Activated T-helper 1 cell treated with anti-CD3 and anti-CD28 coated beads, Interleukin-12 subunit alpha, Interleukin-12 subunit beta, Interleukin-2, Interleukin-4 antibody, amounts not matched to agents 30 ng/mL and 10 ng/mL and 1 ng/mL, durations not matched to agents 14 hours and 24 hours and 36 hours (primary cell): ENCODE measurements at regions of chr3 and their contacts with region 1.

Region 1: GRCh38 chr3:186821429-186822367 is 15.4 kb upstream of the RFC4 start:
- DNase-seq: no peak
- H3K4me3 Mint-ChIP-seq: no peak overlapping the region
- H3K27ac Mint-ChIP-seq: no peak overlapping the region
- H3K4me1 Mint-ChIP-seq: peaks cover 18% of the 10 kb centered on the region
- H3K27me3 Mint-ChIP-seq: peaks cover 8% of the 10 kb centered on the region

Region 2: DNA sequence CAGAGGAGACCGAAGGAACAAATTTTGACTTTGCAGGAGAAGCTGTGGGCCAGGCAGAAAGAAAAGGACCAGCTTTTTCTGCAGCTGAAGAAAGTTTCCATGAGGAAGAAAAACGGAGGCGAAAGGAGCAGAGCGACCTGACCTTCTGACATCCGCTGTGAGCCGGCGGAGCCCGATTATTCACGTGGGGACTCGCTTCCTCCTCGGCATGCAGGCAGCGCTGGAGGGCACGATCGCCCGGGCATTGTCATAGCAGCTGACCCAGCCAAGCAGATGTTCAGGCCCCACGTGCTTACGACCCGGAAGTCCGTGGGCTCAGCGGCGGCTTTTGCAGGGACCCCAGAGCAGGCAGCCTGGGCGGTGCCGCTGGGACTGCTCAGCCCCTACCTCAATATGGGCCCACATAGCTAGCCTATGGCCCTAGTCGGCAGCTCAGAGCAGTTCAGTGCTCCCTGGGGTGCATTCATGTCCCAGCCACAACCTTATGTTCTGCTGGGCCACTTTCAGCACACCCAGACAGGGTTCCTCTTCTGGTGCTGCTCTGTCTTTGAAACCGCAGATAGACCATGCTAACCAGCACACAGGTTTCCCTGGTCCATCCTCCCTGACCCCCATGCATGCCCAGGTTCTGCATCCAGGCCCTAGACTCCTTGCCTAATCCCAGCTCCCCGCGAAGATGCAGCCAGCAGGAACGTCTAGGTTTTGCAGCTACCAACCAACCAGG is 48.8 kb before region 1 on chr3:
- intact Hi-C with region 1: loop called (anchors 5 kb)
- DNase-seq: peak; percentile 44
- H3K4me3 Mint-ChIP-seq: peak overlapping the region; percentile 86
- H3K27ac Mint-ChIP-seq: peak overlapping the region; percentile 92
- H3K4me1 Mint-ChIP-seq: peaks cover 20% of the 10 kb centered on the region
- H3K27me3 Mint-ChIP-seq: peaks cover 2% of the 10 kb centered on the region

Region 3: DNA sequence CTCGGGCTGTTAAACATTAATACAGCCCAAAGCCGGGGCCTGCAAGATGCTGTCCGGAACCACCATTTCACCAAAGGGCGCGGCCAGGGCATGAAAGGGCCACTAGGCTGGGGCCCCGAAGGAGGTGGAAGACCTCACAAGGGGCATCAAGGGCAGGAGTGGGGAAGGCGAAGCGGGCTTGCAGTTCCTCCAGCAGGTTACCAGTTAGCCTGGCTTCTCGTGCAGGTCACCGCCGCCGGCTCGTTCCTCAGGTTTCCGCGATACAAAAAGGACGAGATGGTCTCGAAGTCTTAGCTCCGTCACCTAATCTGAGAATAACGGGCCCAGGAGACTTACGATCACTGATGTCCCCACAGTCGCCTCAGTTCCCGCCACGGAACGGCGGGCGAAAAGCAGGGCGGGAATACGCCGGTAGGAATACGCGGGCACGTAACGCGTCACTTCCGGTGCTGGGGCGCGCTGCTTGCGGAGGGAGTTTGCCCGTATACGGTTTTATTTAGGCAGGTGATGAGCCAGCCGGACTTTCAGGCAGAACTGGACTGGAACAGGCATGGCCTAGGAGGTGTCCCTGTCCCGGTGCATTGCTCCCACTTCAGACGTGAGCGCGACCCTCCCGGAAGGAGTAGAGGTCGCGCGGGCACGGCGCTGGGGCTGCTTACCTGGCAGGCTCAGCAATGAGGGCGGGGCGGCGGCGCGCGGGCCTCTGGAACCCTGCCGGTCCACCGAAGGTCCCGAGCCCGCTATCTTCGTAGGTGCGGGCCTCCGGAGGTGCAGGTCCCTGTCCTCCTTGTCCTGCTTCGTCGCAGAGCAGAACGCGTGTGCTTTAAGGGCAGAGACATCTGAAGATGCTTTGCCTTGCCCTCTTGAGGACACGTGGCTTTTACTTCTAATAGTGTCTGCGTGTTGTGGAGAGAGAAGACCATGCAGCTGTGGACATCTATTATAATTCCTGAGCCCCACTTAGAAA is 15.3 kb before region 1 on chr3 and contains the start of gene RFC4:
- intact Hi-C with region 1: loop called (anchors 1 kb)
- DNase-seq: peak; percentile 80
- H3K4me3 Mint-ChIP-seq: peak within 1 kb of the TSS; percentile 93
- H3K27ac Mint-ChIP-seq: peak within 1 kb of the TSS; percentile 85
- H3K4me1 Mint-ChIP-seq: peaks cover 31% of the 10 kb centered on the region
- H3K27me3 Mint-ChIP-seq: no peaks in the 10 kb centered on the region
- total RNA-seq, gene RFC4: 111 and 122 TPM in 2 replicates

Region 4: DNA sequence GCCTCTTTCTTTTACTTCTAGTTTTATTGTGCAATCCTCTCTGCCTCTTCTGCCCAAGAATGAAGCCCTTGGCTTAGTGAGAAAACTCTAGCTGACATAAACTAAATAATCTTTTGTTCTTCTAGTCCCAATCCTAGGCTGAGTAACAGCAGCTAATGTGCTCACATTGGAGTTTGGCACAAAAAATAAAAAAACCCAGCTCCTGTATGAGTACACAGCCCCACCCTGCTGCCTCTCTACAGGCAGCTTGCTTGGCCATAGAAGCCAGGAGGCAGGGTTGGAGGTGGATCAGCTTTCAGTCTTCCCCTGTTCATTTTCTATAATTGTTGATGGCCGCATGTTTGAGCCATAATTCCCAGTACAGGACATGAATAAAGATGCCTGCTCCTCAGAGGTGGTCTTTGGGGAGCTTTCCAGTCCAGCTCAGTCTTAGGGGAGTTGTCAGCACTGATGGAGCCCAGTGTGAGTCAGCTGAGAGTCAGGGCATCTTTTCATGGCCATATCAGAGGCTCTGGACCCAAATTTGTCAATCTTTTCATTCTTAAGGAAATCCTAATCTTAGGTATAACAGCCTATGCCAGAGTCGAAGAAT is 422.3 kb after region 1 on chr3:
- intact Hi-C with region 1: no loop called
- DNase-seq: no peak
- H3K4me3 Mint-ChIP-seq: no peak overlapping the region
- H3K27ac Mint-ChIP-seq: no peak overlapping the region
- H3K4me1 Mint-ChIP-seq: peaks cover 6% of the 10 kb centered on the region
- H3K27me3 Mint-ChIP-seq: peaks cover 2% of the 10 kb centered on the region

Region 5: GRCh38 chr3:188257384-188258026 is 1435.8 kb after region 1 on chr3:
- intact Hi-C with region 1: no loop called
- DNase-seq: no peak
- H3K4me3 Mint-ChIP-seq: no peak overlapping the region
- H3K27ac Mint-ChIP-seq: peak overlapping the region; percentile 63
- H3K4me1 Mint-ChIP-seq: peaks cover 62% of the 10 kb centered on the region
- H3K27me3 Mint-ChIP-seq: peaks cover 2% of the 10 kb centered on the region